ENCODE measurements at regions of chr5 and their contacts with region 1.

Region 1: GRCh38 chr5:146947181-146947941 is 68.8 kb upstream of the PPP2R2B start:
- DNase-seq: no peak
- H3K4me3 ChIP-seq: no peak overlapping the region
- H3K27ac ChIP-seq: no peak overlapping the region
- H3K4me1 ChIP-seq: peaks cover 0 to 3% (median 1%) of the 10 kb centered on the region in 4 experiments; a peak in 3 of 7 replicates
- H3K27me3 ChIP-seq: no peaks in the 10 kb centered on the region
- CTCF ChIP-seq: peak in 2 of 3 experiments; percentile 56 to 78; a peak in 3 of 4 replicates
- EP300 ChIP-seq: no peak
- POLR2A ChIP-seq: no peak
- RAD21 ChIP-seq: peak; percentile 70 to 75

Region 2: GRCh38 chr5:146533260-146533857 is 414.0 kb before region 1 on chr5:
- CTCF ChIA-PET with region 1: interaction called, 15 read pairs
- POLR2A ChIA-PET with region 1: no interaction called
- DNase-seq: peak; percentile 60 to 84
- H3K4me3 ChIP-seq: no peak overlapping the region
- H3K27ac ChIP-seq: no peak overlapping the region
- H3K4me1 ChIP-seq: peaks cover 0 to 7% (median 3%) of the 10 kb centered on the region in 4 experiments; a peak in 4 of 7 replicates
- H3K27me3 ChIP-seq: no peaks in the 10 kb centered on the region
- CTCF ChIP-seq: peak; percentile 61 to 92 (median 82)
- EP300 ChIP-seq: no peak
- POLR2A ChIP-seq: no peak
- RAD21 ChIP-seq: peak; percentile 92 to 93

Region 3: DNA sequence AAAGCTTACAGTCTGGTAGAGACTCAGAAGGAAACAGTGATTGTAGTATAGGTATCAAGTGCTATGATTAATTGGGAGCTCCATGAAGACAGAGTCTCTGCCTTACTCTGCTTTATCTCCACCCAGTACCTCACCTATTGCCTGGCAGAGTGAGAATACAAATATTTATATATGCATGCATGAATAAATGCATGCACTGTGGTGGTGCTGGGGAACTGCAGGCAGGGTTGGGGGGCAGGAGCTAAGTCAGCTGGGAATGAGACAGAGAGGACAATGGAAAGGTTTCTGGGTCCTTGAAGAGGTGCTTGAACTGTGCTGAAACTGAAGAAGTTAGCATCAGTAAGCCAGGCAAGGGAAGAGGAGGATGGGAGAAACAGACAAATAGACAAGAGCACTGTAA is 12.0 kb after region 1 on chr5:
- CTCF ChIA-PET with region 1: interaction called, 18 read pairs
- POLR2A ChIA-PET with region 1: no interaction called
- DNase-seq: no peak
- H3K4me3 ChIP-seq: no peak overlapping the region
- H3K27ac ChIP-seq: no peak overlapping the region
- H3K4me1 ChIP-seq: no peaks in the 10 kb centered on the region
- H3K27me3 ChIP-seq: no peaks in the 10 kb centered on the region
- CTCF ChIP-seq: no peak
- EP300 ChIP-seq: no peak
- POLR2A ChIP-seq: no peak
- RAD21 ChIP-seq: no peak

Region 4: DNA sequence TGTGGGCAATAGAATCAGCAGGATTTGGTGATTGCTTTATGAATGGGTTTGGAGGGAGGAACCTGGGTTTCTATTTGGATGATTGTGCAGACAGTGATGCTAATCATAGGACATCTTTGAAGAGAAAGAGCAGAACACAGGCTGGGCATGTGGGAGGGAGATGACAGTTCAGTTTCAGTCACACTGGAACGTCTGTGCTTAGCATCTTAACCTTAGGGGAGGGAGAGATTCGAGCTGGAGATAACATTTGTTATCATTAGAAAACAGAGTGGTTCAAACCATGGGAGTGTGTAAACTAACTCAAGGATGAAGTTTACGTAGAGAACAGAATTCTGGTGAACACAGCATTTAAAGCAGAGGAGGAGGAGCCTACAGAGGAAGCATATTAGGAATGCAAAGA is 69.8 kb after region 1 on chr5:
- CTCF ChIA-PET with region 1: no interaction called
- POLR2A ChIA-PET with region 1: no interaction called
- DNase-seq: no peak
- H3K4me3 ChIP-seq: no peak overlapping the region
- H3K27ac ChIP-seq: no peak overlapping the region
- H3K4me1 ChIP-seq: peaks cover 0 to 2% (median 0%) of the 10 kb centered on the region in 4 experiments; a peak in 2 of 7 replicates
- H3K27me3 ChIP-seq: no peaks in the 10 kb centered on the region
- CTCF ChIP-seq: no peak
- EP300 ChIP-seq: no peak
- POLR2A ChIP-seq: no peak
- RAD21 ChIP-seq: no peak

Region 5: DNA sequence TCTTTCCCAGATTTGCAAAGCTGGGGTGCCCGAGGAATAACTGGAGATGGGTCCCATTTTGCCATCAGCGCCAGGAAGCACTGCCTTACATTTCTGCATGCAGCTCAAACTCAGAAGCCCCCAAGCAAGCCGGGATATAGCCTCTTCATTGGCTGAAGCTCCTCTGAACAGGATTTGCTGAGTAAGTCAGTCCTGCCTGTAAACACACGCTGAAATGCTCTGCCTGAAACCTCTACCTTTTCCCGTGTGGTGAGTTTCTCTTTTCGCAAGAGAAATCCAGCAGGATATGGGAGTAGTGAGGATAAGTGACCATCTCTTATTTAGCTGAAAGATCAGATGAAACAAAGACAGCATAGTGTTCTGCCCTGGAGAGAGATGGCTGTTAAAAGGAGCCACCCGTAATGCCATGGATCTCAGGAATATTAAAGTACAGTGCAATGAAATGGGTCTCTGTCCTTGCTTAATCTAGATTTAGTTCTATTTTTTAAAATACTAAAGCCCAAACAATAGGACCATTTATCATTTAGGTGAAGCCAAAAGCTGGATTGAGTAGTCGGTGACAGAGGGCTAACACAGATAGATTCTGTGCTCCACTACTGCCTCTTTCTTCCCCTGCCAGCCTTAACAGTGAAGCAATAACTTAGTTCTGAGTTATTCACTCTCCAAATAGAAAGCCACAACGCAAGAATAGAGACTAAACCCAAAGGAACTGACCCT is 108.6 kb after region 1 on chr5:
- CTCF ChIA-PET with region 1: no interaction called
- POLR2A ChIA-PET with region 1: no interaction called
- DNase-seq: no peak
- H3K4me3 ChIP-seq: no peak overlapping the region
- H3K27ac ChIP-seq: no peak overlapping the region
- H3K4me1 ChIP-seq: no peaks in the 10 kb centered on the region
- H3K27me3 ChIP-seq: no peaks in the 10 kb centered on the region
- CTCF ChIP-seq: no peak
- EP300 ChIP-seq: no peak
- POLR2A ChIP-seq: no peak
- RAD21 ChIP-seq: no peak

Measured in H1 (cell line).